GM18951 (cell line): ENCODE measurements at regions of chr6 and their contacts with region 1.

Region 1: GRCh38 chr6:106097411-106098231 is 11.5 kb downstream of the PRDM1 start:
- POLR2A ChIP-seq: no peak

Region 2: DNA sequence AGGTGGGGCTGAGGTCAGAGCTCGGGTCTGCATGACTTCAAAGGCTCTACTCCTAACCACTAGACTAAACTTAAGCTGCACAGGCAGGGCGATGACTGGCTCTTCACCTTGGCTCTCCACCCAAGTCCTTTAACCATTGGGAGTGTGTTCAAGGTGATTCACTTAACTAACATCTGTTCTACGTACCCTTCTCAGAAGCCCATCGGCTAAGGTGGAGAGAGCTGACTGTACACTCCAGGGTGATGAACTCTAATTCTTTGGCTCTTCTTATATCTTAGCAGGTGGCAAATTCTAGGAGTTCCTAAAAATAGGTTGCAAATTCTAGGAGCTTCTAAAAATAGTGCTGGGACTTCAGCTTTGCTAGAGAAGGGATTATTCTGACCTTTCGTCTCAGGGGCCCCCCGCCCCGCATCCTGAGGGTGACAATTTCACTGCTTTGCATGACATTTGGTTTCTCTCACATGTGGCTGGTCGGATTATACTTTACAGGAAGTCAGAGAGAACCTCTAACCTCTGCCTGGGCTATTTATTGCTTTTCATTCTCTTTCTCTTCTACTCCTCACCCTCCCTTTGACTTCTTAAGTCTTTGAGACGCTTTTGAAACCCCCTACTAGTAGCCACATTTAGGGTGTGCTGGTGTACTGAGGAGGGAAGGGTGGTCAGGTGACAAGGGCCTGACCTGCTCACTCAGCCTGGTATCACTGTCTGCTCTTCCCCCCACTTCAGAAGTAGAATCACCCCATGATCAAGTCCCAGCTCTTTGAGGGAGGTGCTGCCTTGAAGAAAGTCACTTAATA is 44.0 kb after region 1 on chr6:
- in situ Hi-C with region 1: no loop called
- POLR2A ChIP-seq: peak; percentile 23

Region 3: GRCh38 chr6:106223300-106223930 is 125.8 kb after region 1 on chr6:
- in situ Hi-C with region 1: loop called (anchors 10 kb)
- POLR2A ChIP-seq: no peak

Region 4: DNA sequence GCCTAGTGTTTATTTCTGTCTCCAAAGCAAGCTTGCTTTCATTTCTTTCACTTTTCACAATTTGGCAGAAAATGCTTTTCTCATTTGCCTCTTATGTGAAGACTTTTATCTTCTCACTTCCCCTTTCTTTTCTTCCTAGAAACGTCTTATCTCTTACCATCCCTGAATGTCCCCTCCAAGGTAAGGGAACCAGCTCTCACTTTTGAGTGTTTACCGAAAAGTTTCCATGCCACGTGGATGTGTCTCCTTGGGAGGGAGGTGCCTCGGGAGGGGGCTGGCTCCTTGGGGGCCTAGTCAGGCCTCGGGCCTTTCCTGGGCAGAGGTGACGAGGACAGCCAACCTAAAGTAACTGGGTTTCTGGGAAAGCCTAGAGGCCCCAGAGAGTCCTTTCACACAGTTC is 749.5 kb after region 1 on chr6:
- in situ Hi-C with region 1: no loop called
- POLR2A ChIP-seq: no peak